AG04449 (cell line): ENCODE measurements at regions of chr19 and their contacts with region 1.

Region 1: GRCh38 chr19:13033819-13034611 is 38.7 kb downstream of the NFIX start:
- DNase-seq: no peak
- H3K4me3 ChIP-seq: no peak overlapping the region
- CTCF ChIP-seq: peak; percentile 67

Region 2: GRCh38 chr19:12890787-12891552 is 143.0 kb before region 1 on chr19 and contains the start of gene GCDH:
- CTCF ChIA-PET with region 1: no interaction called
- POLR2A ChIA-PET with region 1: no interaction called
- DNase-seq: peak; percentile 92
- H3K4me3 ChIP-seq: peak within 1 kb of the TSS; percentile 94
- CTCF ChIP-seq: no peak

Region 3: DNA sequence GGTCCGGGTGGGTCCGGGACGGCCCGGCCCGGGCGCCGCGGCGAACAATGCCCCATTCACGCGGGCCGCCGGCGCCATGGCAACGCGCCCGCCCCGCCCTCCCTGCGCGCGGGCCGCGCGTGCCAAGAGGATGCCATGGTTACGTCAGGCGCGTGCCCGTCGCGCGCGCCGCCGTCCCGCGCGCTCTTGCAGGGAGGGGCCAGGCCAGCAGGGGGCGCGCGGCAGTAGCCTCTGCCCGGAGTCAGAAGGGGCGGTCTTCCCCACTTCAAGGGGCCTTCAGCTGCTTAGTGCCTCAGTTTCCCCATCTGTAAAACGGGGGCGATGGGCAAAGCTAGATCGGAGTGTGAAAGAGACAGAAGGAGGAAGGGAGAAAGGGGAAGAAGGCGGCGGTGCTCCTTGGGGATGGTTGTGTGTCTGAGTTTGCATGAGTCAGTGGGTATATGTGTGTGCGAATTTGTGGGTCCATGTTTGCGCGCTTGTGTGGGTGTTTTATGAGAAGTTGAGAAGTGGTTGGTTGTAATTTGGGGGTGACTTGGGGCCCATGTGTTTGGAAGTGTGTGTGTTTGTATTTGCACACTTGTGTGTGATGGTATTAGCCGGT is 50.4 kb before region 1 on chr19:
- CTCF ChIA-PET with region 1: interaction called, 18 read pairs
- POLR2A ChIA-PET with region 1: no interaction called
- DNase-seq: no peak
- H3K4me3 ChIP-seq: peak overlapping the region; percentile 52
- CTCF ChIP-seq: peak; percentile 87

Region 4: GRCh38 chr19:13007292-13008045 is 26.5 kb before region 1 on chr19:
- CTCF ChIA-PET with region 1: interaction called, 12 read pairs
- POLR2A ChIA-PET with region 1: no interaction called
- DNase-seq: no peak
- H3K4me3 ChIP-seq: no peak overlapping the region
- CTCF ChIP-seq: peak; percentile 4

Region 5: DNA sequence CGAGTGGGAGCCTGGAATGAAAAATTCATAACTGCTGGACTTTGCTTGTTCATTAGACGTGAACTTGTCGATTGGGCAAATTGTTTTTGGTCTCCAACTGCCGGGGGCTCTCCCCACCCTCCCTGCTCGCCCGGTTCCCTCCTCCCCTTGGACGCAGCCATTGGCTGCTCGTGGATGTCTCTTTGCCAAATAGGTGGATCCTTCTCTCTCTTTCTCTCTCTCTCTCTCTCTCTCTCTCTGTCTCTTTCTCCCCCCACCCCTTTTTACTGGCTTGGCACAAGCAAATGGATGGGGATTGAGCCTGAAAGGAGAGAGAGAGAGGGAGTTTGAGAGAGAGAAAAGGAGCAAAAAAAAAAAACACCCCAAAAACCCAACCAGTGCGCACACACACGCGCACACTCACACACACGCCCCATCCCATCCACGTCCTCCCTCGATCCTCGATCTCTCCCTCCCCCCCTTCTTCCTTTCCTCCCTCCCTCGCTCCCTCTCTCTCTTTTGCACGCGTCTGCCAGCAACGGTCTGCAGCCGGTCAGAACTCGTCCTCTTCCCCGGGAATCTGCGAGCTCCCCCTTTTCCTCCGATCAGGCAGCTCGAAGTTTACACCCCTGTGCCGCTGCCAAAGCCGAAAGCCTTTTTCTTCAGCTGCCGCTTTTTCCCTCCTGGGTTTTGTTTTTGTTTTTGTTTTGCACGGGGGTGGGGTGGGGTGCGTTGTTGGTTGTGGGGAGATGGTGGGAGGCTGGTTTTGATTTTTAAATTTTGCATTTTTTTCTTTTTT is 11.0 kb before region 1 on chr19:
- CTCF ChIA-PET with region 1: interaction called, 120 read pairs
- POLR2A ChIA-PET with region 1: interaction called, 6 read pairs
- DNase-seq: peak; percentile 88
- H3K4me3 ChIP-seq: peak overlapping the region; percentile 65
- CTCF ChIP-seq: no peak

Region 6: GRCh38 chr19:13044231-13044836 is 10.3 kb after region 1 on chr19:
- CTCF ChIA-PET with region 1: interaction called, 120 read pairs
- POLR2A ChIA-PET with region 1: interaction called, 5 read pairs
- DNase-seq: no peak
- H3K4me3 ChIP-seq: no peak overlapping the region
- CTCF ChIP-seq: no peak

Region 7: DNA sequence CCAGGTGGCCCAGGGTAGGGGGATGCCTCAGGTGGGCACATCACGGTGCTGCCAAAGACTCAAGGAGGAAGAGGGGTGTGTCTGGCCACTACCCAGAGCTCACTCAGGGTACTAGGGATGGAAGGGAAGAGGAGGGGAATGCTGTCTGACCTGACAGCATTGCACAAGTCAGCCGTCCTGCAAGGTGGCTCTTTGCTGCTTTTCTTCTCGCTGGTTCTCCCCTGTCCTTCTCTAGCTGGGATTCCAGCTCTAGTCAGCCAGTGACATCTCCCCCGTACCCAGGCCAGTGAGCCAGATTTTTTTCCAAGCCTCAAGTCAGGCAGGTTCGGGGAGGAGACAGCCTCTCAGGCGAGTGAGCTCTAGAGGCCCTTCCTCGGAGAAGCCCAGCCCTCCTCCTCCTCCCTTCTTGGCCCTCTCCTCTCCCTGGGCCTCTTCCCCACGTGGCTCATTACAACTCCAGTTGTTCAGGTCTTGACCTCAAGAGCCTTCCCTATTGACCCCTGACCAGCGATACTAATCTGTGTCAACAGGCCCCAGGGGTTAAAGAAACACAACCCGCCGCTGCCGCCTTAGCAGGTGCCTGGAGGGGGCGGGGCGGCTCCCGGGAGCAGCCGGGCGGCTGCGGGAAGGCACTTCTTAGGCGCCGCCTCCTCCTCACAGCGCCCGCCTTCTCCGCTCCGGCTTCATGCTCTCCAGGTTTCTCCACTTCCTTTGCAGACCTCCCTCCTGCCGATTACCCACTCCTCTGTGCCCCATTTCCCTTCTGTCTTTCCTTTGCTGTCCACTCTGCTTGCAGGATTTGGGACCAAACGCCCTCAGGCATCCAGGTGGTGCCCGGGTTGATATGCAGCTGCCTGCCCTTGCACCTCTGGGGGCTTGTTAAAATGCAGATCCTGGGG is 17.5 kb after region 1 on chr19:
- CTCF ChIA-PET with region 1: interaction called, 427 read pairs
- POLR2A ChIA-PET with region 1: interaction called, 12 read pairs
- DNase-seq: no peak
- H3K4me3 ChIP-seq: no peak overlapping the region
- CTCF ChIP-seq: no peak

Region 8: GRCh38 chr19:13150187-13150930 is 116.3 kb after region 1 on chr19 and contains the starts of genes IER2 and STX10:
- CTCF ChIA-PET with region 1: no interaction called
- POLR2A ChIA-PET with region 1: no interaction called
- DNase-seq: no peak
- H3K4me3 ChIP-seq: peak within 1 kb of the TSS; percentile 96
- CTCF ChIP-seq: peak; percentile 68

Region 9: DNA sequence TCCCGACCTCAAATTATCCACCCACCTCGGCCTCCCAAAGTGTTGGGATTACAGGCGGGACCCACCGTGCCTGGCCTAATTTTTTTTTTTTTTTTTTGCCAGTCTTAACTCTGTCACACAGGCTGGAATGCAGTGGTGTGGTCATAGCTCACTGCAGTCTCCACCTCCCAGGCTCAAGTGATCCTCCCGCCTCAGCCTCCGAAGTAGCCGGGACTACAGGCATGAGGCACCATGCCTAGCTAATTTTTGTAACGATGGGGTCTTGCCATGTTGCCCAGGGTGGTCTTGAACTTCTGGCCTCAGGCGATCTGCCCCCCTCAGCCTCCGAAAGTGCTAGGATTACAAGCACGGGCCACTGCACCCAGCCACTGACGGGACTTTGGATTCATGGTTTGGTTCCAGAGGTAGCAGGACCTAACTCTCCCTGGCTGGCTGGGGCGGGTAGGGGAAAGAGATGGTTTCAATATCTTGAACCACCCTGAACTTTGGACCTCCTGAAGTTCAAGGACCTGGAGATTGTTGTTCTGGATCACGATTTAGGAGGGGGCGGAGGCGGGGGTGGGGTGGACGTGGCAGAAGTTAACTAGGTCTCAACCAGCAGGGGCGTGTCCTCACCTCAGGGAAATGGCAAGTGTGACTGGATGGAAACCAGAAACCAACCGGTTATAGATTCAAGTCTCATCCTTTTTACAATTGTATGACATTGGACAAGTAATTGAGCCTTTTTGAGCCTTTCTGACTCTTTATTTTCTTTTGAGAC is 156.9 kb after region 1 on chr19:
- CTCF ChIA-PET with region 1: no interaction called
- POLR2A ChIA-PET with region 1: no interaction called
- DNase-seq: no peak
- H3K4me3 ChIP-seq: no peak overlapping the region
- CTCF ChIP-seq: no peak